Activated T-helper 2 cell treated with anti-CD3 and anti-CD28 coated beads, Interferon-gamma antibody, Interleukin-2, Interleukin-4, amounts not matched to agents 10 μg/mL and 5 μg/mL and 100 μg/mL, durations not matched to agents 14 hours and 24 hours and 36 hours (primary cell): ENCODE measurements at regions of chr3 and their contacts with region 1.

Region 1: DNA sequence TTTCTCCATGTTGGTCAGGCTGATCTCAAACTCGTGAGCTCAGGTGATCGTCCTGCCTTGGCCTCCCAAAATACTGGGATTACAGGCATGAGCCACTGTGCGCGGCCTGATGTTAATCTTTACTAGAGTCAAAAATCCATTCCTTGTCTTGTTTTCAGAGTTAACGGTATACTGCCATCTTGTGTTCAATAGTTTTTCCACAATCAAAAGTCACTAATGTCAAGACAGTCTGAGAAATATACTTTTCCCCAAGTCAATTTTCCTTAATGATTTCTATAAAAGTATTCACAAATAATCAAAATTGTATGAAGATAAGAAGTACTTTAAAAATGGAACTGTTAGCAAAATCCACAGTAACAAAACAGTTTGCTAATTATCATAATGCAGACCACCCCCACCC is 8.5 kb downstream of the CRBN start:
- DNase-seq: no peak
- H3K4me3 Mint-ChIP-seq: no peak overlapping the region
- H3K27ac Mint-ChIP-seq: peak overlapping the region; percentile 75
- H3K4me1 Mint-ChIP-seq: peaks cover 39% of the 10 kb centered on the region
- H3K27me3 Mint-ChIP-seq: no peaks in the 10 kb centered on the region

Region 2: GRCh38 chr3:2765002-2765579 is 405.9 kb before region 1 on chr3:
- intact Hi-C with region 1: loop called (anchors 5 kb)
- DNase-seq: no peak
- H3K4me3 Mint-ChIP-seq: no peak overlapping the region
- H3K27ac Mint-ChIP-seq: no peak overlapping the region
- H3K4me1 Mint-ChIP-seq: no peaks in the 10 kb centered on the region
- H3K27me3 Mint-ChIP-seq: no peaks in the 10 kb centered on the region

Region 3: GRCh38 chr3:3154879-3155610 is 16.0 kb before region 1 on chr3:
- intact Hi-C with region 1: loop called (anchors 2 kb)
- DNase-seq: no peak
- H3K4me3 Mint-ChIP-seq: no peak overlapping the region
- H3K27ac Mint-ChIP-seq: peak overlapping the region; percentile 22
- H3K4me1 Mint-ChIP-seq: peaks cover 10% of the 10 kb centered on the region
- H3K27me3 Mint-ChIP-seq: no peaks in the 10 kb centered on the region